ENCODE measurements at regions of chr19 and their contacts with region 1.

Region 1: GRCh38 chr19:32357720-32358119 is 12.3 kb downstream of the ZNF507 start:
- DNase-seq: no peak
- H3K4me3 ChIP-seq: no peak overlapping the region
- H3K4me3 Mint-ChIP-seq: no peak overlapping the region
- H3K27ac ChIP-seq: no peak overlapping the region
- H3K27ac Mint-ChIP-seq: no peak overlapping the region
- H3K4me1 ChIP-seq: peaks cover 21% of the 10 kb centered on the region
- H3K4me1 Mint-ChIP-seq: peaks cover 26 to 74% (median 53%) of the 10 kb centered on the region in 4 donors
- H3K27me3 ChIP-seq: no peaks in the 10 kb centered on the region
- H3K27me3 Mint-ChIP-seq: no peaks in the 10 kb centered on the region

Region 2: GRCh38 chr19:32302778-32303177 is 54.9 kb before region 1 on chr19:
- CTCF ChIA-PET with region 1: no interaction called
- POLR2A ChIA-PET with region 1: no interaction called
- intact Hi-C with region 1: no loop called
- DNase-seq: no peak
- H3K4me3 ChIP-seq: no peak overlapping the region
- H3K4me3 Mint-ChIP-seq: no peak overlapping the region
- H3K27ac ChIP-seq: no peak overlapping the region
- H3K27ac Mint-ChIP-seq: no peak overlapping the region
- H3K4me1 ChIP-seq: no peaks in the 10 kb centered on the region
- H3K4me1 Mint-ChIP-seq: no peaks in the 10 kb centered on the region
- H3K27me3 ChIP-seq: no peaks in the 10 kb centered on the region
- H3K27me3 Mint-ChIP-seq: peaks cover 11 to 21% of the 10 kb centered on the region in 2 donors

Region 3: DNA sequence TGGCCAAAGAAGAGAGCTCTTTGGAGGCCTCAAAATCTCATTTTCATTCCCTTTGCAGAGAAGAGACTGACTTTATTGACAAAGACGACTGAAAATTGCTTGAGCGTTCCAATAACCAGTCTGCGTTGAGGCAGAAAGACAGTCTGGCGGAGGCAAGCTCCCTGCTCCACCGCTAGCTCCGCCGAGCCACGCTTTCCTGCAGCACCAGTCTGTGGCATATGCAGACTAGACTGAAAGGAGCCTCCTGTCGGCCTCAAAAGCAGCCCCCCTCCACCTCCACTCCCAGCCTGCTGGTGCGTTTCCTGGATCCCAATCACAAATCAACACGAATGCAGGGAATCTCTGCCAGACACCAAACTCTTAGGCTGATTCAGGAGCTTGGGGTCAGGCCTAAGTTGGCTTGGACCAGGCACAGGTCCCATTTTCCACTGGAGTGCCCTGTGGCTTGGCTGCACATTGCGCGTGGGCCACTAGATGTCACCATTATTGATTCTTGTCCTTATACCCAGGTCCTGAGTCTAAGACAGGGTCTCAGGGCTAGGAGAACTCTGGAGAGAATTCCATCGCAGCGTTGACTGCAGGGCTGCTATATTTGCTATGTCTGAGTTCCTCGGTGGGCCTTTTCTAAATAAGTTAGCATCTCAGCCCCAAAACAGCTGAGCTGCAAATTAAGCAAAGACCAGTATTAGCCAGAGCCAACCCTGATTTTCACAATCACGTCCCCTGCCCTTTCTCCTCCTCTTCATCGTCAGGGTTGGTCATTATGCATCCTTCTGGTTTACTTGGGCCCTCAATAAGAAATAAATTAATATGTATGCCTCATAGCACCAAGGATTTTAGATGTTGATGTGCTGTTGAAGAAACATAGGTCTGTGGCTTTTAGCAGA is 17.5 kb before region 1 on chr19:
- CTCF ChIA-PET with region 1: interaction called, 11 read pairs
- POLR2A ChIA-PET with region 1: interaction called, 10 read pairs
- intact Hi-C with region 1: no loop called
- DNase-seq: peak in 4 of 5 donors; percentile 11 to 28 (median 21)
- H3K4me3 ChIP-seq: no peak overlapping the region
- H3K4me3 Mint-ChIP-seq: no peak overlapping the region
- H3K27ac ChIP-seq: no peak overlapping the region
- H3K27ac Mint-ChIP-seq: peak overlapping the region in 2 of 7 donors; percentile 62 to 67
- H3K4me1 ChIP-seq: peaks cover 7% of the 10 kb centered on the region
- H3K4me1 Mint-ChIP-seq: peaks cover 0 to 3% (median 0%) of the 10 kb centered on the region in 4 donors
- H3K27me3 ChIP-seq: no peaks in the 10 kb centered on the region
- H3K27me3 Mint-ChIP-seq: peaks cover 0 to 1% of the 10 kb centered on the region in 2 donors

Region 4: GRCh38 chr19:32464279-32464678 is 106.6 kb after region 1 on chr19:
- CTCF ChIA-PET with region 1: no interaction called
- POLR2A ChIA-PET with region 1: no interaction called
- intact Hi-C with region 1: no loop called
- DNase-seq: no peak
- H3K4me3 ChIP-seq: no peak overlapping the region
- H3K4me3 Mint-ChIP-seq: no peak overlapping the region
- H3K27ac ChIP-seq: no peak overlapping the region
- H3K27ac Mint-ChIP-seq: no peak overlapping the region
- H3K4me1 ChIP-seq: peaks cover 1% of the 10 kb centered on the region
- H3K4me1 Mint-ChIP-seq: peaks cover 4 to 5% (median 5%) of the 10 kb centered on the region in 4 donors
- H3K27me3 ChIP-seq: no peaks in the 10 kb centered on the region
- H3K27me3 Mint-ChIP-seq: no peaks in the 10 kb centered on the region

Measured in CD4-positive, alpha-beta memory T cell (primary cell).